ENCODE measurements at regions of chr6 and their contacts with region 1.

Region 1: GRCh38 chr6:71288228-71289001 is at the start of gene OGFRL1:
- DNase-seq: no peak
- H3K4me3 ChIP-seq: peak within 1 kb of the TSS; percentile 65
- CTCF ChIP-seq: no peak

Region 2: GRCh38 chr6:71107911-71108420 is 180.4 kb before region 1 on chr6:
- CTCF ChIA-PET with region 1: no interaction called
- POLR2A ChIA-PET with region 1: no interaction called
- DNase-seq: peak; percentile 21
- H3K4me3 ChIP-seq: peak overlapping the region; percentile 1
- CTCF ChIP-seq: no peak

Region 3: DNA sequence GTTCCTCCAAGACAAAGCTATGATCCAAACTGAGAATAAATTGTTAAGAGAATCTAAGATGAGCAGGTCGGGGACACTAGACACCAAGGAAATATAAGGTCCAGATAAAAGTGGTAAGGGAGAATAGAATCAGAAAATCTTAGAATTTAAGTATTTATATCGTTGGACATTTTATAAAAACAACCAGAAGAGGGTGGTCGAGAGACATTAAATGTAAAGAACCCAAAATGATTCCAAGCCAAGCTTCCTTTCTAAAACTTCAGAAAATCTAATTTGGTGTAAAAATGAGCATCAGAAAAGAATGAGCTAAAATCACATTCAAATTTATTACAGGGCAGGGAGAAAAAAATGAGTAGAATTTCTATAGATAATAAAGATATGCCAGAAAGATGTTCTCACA is 97.6 kb before region 1 on chr6:
- CTCF ChIA-PET with region 1: interaction called, 10 read pairs
- POLR2A ChIA-PET with region 1: no interaction called
- DNase-seq: no peak
- H3K4me3 ChIP-seq: no peak overlapping the region
- CTCF ChIP-seq: no peak